ENCODE measurements at regions of chr1 and their contacts with region 1.

Region 1: GRCh38 chr1:78839704-78840277 is 166.7 kb downstream of the ADGRL4 start:
- DNase-seq: peak in 1 of 2 experiments; percentile 42
- H3K4me3 ChIP-seq: no peak overlapping the region
- H3K4me3 Mint-ChIP-seq: no peak overlapping the region
- H3K27ac Mint-ChIP-seq: no peak overlapping the region
- H3K4me1 ChIP-seq: no peaks in the 10 kb centered on the region
- H3K4me1 Mint-ChIP-seq: no peaks in the 10 kb centered on the region
- H3K27me3 ChIP-seq: no peaks in the 10 kb centered on the region
- H3K27me3 Mint-ChIP-seq: no peaks in the 10 kb centered on the region
- CTCF ChIP-seq: peak; percentile 36 to 51

Region 2: DNA sequence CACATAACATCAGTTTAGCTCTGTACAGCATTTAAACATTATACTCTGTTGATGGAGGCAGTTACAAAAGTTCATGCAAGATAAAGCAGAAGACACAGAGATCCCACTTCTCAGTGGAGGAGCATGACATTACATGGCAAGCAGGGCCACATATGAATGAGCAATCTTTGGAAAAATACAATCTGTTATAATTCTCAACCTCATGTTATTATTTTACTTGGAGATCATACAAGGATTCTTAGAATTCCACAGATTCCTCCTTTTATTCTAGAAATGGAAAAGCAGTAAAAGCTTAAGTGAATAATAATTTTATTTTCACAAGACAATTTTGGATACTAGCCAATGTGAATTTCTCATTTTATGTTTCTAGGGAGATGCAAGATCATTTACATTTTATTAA is 123.6 kb before region 1 on chr1:
- CTCF ChIA-PET with region 1: no interaction called
- POLR2A ChIA-PET with region 1: no interaction called
- intact Hi-C with region 1: no loop called
- DNase-seq: no peak
- H3K4me3 ChIP-seq: no peak overlapping the region
- H3K4me3 Mint-ChIP-seq: no peak overlapping the region
- H3K27ac Mint-ChIP-seq: no peak overlapping the region
- H3K4me1 ChIP-seq: no peaks in the 10 kb centered on the region
- H3K4me1 Mint-ChIP-seq: no peaks in the 10 kb centered on the region
- H3K27me3 ChIP-seq: no peaks in the 10 kb centered on the region
- H3K27me3 Mint-ChIP-seq: peaks cover 2% of the 10 kb centered on the region
- CTCF ChIP-seq: no peak

Region 3: GRCh38 chr1:79042117-79042516 is 202.3 kb after region 1 on chr1:
- CTCF ChIA-PET with region 1: interaction called, 4 read pairs
- POLR2A ChIA-PET with region 1: no interaction called
- intact Hi-C with region 1: loop called (anchors 10 kb)
- DNase-seq: no peak
- H3K4me3 ChIP-seq: no peak overlapping the region
- H3K4me3 Mint-ChIP-seq: no peak overlapping the region
- H3K27ac Mint-ChIP-seq: no peak overlapping the region
- H3K4me1 ChIP-seq: no peaks in the 10 kb centered on the region
- H3K4me1 Mint-ChIP-seq: no peaks in the 10 kb centered on the region
- H3K27me3 ChIP-seq: no peaks in the 10 kb centered on the region
- H3K27me3 Mint-ChIP-seq: no peaks in the 10 kb centered on the region
- CTCF ChIP-seq: no peak

Measured in Caco-2 (cell line).